Left ventricle myocardium superior (tissue), 1 donor: ENCODE measurements at regions of chr11 and their contacts with region 1.

Region 1: DNA sequence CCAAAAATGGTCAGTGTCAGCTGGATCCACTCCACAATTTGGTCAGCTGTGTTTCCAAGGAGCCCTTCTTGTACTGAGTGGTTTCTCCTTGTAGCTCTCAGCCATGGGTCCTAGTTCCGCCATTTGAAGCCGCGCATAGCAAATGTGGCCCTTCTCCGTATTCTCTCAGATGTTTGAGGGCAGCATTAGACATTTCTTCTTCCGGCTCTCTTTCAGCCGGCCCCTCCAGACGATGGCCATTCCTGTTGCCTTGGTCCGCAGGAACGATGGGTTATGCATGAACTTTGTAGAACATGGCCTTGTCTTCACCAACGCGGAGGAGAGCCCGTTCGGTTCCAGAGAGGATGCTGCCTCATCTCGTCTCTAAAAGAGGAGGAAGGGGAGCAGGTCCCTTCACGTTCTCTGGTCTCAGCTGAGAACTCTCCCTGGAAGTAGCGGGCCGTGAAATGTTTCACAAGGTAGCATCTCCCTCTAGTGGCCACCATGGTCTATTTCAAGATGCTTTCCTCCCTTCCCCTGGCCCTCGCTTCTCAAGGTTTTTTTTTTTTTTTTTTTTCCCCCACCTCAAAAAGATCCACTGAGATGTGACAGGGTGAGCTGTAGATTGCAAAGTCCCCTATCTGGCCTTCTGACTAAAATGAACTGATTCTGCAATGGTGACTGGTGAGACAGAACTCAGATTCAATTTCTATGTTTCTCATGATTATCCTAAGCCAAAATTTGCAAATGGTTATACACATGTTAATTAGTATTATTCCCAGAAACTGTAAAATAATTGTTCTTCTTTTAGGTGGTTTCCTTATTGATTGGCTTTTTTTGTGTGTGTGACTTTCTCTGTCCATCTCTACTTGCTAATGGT is 19.8 kb upstream of the PLET1 start:
- DNase-seq: peak; percentile 45
- ATAC-seq: peak; percentile 94

Region 2: GRCh38 chr11:112113539-112114457 is 166.7 kb before region 1 on chr11:
- intact Hi-C with region 1: loop called (anchors 10 kb)
- DNase-seq: no peak
- ATAC-seq: peak; percentile 77

Region 3: GRCh38 chr11:112219476-112220232 is 60.8 kb before region 1 on chr11:
- intact Hi-C with region 1: loop called (anchors 5 kb)
- DNase-seq: no peak
- ATAC-seq: peak; percentile 93

Region 4: DNA sequence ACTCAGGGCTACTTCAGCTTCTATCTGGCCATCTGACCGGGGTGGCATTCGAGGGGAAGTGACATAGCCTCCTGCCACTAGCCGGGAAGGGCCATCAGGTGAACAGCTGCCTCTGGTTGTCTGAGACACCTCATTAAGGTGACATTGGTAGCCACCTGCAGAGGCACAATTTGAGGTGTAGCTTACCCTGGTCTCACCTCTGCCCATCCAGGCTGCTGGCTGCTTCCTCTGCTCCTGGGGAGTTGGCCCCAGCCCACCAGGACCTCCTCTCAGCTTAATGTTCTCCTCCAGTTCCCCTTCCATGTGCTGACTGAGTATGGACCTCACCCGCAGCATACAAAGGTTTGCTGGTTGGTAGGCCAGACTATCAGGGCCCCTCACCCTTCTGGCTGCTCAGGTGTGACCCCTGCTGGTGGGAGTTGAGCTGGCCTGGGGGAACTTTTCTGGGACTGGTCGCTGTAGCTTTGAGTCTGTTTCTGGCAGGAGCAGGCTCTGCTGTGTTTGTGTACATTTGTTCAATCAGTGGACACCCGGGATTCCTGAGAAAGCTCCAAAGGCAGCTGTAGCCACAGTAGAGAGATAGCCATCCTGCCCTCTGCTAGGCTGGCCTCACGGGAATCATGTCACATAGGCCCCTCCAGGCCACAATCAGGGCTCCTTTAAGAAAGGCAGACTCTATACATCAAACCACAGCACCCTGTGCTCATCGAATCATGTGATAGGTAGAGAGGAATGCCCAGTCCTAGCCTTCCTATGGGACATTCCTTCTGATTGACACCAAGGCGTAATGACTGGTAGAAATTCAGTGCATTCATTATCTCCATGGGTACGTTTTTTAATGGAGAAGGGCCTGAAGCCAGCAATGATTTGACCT is 275.2 kb after region 1 on chr11:
- intact Hi-C with region 1: loop called (anchors 10 kb)
- DNase-seq: peak; percentile 71
- ATAC-seq: peak; percentile 89